ENCODE measurements at regions of chr16 and their contacts with region 1.

Region 1: DNA sequence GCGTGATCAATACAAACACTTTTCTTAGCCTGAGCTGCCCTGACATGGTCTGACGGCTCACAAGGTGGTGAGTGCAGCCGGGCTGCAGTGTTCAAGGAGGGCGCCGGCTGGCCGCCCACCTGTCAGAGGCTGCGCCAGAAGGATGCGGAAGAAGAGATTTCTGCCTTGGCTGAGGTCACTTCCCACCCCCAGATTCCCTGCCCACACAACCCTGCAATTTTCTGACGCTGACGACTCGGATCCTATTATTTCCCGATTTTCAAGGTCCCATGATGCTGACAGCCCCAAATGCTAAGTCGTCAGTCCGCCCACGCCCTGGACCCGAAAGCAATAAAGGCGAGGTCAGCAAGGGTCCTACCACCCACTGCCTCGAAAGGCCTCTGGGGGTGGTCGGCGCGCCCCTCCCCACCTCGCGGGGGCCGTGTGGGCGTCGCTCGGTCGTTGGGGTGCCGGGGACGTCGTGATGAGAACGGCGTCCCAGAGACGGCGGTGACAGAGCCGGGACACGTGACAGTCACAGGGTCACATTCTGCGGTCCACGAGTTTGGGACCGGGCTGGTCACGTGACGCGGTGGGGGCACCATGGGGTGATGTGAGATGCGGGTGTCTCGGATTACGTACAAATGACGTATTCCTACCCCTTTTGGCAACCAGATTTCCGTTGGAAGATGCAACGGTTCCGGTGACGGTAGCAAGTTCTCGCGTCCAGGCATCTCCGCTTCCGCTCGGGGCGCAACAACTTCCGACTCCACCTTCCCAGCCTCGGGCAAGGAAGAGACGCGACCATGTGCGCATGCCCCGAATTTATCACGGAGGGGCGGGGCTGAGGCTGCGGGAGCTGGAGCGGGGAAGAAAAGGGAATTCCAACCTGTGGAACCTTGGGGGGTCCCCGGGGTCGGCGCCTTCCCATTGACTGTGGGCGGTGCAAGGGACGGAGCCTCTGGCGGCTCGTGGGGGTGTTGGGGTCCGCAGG is at the start of gene STX4:
- DNase-seq: peak; percentile 96
- H3K4me3 Mint-ChIP-seq: peak within 1 kb of the TSS; percentile 91
- H3K27ac Mint-ChIP-seq: peak within 1 kb of the TSS; percentile 84
- H3K4me1 Mint-ChIP-seq: no peaks in the 10 kb centered on the region
- H3K27me3 Mint-ChIP-seq: no peaks in the 10 kb centered on the region
- CTCF ChIP-seq: no peak
- total RNA-seq, gene STX4: 66.7 and 89.2 TPM in 2 replicates

Region 2: DNA sequence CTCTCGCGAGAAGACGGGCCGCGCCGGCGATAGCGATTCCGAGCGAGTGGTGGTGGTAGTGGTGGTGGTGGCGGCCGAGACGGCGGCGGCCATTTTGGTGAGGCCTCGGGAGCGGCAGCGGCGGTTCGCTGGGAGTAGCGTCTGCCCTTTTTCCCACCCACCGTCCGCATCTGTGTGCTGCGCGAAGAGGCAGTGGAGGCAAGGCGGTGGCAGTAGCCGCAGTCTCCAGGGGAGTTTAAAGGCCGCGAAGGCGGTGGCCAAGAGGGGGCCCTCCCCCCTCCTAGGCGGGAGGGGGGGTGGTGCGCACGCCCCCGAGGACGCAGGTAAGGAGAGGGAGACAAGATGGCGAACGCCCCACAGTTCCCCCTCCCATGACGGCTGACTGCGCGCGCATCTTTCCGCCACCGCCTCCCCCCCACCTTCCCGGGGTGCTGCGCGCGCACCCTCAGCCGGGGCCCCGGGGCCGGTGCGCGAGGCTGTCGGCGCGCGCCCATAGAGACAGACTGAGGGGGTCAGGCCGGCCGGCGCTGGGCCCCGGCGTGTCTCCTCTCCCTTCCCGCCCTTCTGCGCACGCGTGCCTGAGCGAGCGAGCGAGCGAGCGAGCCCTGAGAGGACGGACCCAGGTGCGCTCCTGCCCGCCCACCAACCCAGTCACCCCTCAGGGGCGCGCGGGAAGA is 334.7 kb before region 1 on chr16:
- CTCF ChIA-PET with region 1: no interaction called
- POLR2A ChIA-PET with region 1: no interaction called
- intact Hi-C with region 1: no loop called
- DNase-seq: peak; percentile 98
- H3K4me3 Mint-ChIP-seq: peak overlapping the region; percentile 86
- H3K27ac Mint-ChIP-seq: peak overlapping the region; percentile 100
- H3K4me1 Mint-ChIP-seq: peaks cover 14% of the 10 kb centered on the region
- H3K27me3 Mint-ChIP-seq: no peaks in the 10 kb centered on the region
- CTCF ChIP-seq: no peak

Region 3: DNA sequence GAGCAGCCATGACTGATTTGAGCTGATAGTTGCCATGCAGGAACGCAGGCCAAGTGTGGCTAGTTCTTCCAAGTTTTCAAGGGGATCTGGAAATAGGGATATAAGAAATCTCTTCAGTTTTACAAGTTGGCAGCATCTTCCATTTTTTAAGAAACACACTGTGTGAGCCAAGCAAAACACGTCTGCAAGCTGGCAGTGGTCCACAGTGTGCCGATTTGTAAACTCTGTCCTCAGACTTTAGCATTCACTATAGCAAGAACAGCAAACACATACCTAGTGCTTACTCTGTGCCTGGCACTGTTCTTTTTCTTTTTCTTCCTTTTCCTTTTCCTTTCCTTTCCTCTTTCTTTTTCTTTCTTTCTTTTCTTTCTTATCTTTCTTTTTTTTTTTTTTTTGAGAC is 81.3 kb before region 1 on chr16:
- CTCF ChIA-PET with region 1: no interaction called
- POLR2A ChIA-PET with region 1: no interaction called
- intact Hi-C with region 1: no loop called
- DNase-seq: peak; percentile 62
- H3K4me3 Mint-ChIP-seq: peak overlapping the region; percentile 41
- H3K27ac Mint-ChIP-seq: no peak overlapping the region
- H3K4me1 Mint-ChIP-seq: no peaks in the 10 kb centered on the region
- H3K27me3 Mint-ChIP-seq: no peaks in the 10 kb centered on the region
- CTCF ChIP-seq: no peak

Region 4: GRCh38 chr16:30997000-30997886 is 35.8 kb before region 1 on chr16:
- CTCF ChIA-PET with region 1: no interaction called
- POLR2A ChIA-PET with region 1: interaction called, 3 read pairs
- intact Hi-C with region 1: loop called (anchors 5 kb)
- DNase-seq: peak; percentile 79
- H3K4me3 Mint-ChIP-seq: peak overlapping the region; percentile 78
- H3K27ac Mint-ChIP-seq: peak overlapping the region; percentile 70
- H3K4me1 Mint-ChIP-seq: peaks cover 11% of the 10 kb centered on the region
- H3K27me3 Mint-ChIP-seq: no peaks in the 10 kb centered on the region
- CTCF ChIP-seq: no peak

Region 5: GRCh38 chr16:31022544-31023251 is 10.3 kb before region 1 on chr16:
- CTCF ChIA-PET with region 1: no interaction called
- POLR2A ChIA-PET with region 1: interaction called, 10 read pairs
- intact Hi-C with region 1: no loop called
- DNase-seq: no peak
- H3K4me3 Mint-ChIP-seq: no peak overlapping the region
- H3K27ac Mint-ChIP-seq: no peak overlapping the region
- H3K4me1 Mint-ChIP-seq: no peaks in the 10 kb centered on the region
- H3K27me3 Mint-ChIP-seq: no peaks in the 10 kb centered on the region
- CTCF ChIP-seq: no peak

Region 6: GRCh38 chr16:31052124-31052523 is 19.1 kb after region 1 on chr16:
- CTCF ChIA-PET with region 1: interaction called, 7 read pairs
- POLR2A ChIA-PET with region 1: interaction called, 10 read pairs
- intact Hi-C with region 1: loop called (anchors 1 kb)
- DNase-seq: peak; percentile 89
- H3K4me3 Mint-ChIP-seq: no peak overlapping the region
- H3K27ac Mint-ChIP-seq: peak overlapping the region; percentile 73
- H3K4me1 Mint-ChIP-seq: peaks cover 20% of the 10 kb centered on the region
- H3K27me3 Mint-ChIP-seq: no peaks in the 10 kb centered on the region
- CTCF ChIP-seq: no peak

Region 7: DNA sequence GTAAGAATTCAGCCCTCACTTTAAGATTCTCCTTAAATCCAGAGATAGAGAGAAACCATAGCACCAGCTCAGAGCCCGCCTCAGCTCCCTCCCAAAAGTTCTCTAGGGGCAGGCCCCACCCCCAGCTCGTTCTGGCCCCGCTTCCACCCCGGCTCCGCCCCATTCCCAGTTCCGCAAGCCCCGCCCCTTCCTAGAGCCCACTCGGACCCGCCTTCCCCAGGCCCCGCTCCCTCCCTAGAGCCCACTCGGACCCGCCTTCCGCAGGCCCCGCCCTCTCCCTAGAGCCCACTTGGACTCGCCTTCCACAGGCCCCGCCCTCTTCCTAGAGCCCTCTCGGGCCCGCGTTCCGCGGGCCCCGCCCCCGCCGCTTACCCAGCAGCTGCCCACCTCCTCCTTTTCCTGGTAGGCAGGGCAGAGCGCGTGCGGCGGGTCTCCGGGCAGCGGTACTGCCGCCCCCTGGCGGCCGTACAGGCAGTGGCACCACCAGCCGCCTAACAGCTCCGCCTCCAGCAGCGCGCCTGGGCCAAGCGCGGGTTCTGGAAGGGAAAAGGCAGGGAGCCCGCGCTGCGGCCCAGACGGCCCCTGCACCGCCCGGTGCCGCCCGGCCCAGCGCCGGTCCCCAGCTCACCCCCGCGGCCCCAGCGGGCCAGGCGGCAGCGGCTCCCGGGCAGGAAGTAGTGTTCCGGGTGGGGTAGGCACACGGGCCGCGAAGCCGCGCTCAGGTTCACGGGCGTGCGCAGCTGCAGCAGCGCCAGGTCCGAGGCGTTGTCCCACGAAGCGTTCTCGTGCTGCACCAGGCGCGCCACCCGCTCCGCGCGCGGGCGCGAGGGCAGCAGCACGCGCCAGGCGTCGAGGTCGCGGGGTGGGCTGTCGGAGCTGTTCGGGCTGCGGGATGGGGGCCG is 109.3 kb after region 1 on chr16:
- CTCF ChIA-PET with region 1: interaction called, 4 read pairs
- POLR2A ChIA-PET with region 1: interaction called, 7 read pairs
- intact Hi-C with region 1: loop called (anchors 5 kb)
- DNase-seq: peak; percentile 99
- H3K4me3 Mint-ChIP-seq: peak overlapping the region; percentile 71
- H3K27ac Mint-ChIP-seq: peak overlapping the region; percentile 91
- H3K4me1 Mint-ChIP-seq: peaks cover 21% of the 10 kb centered on the region
- H3K27me3 Mint-ChIP-seq: no peaks in the 10 kb centered on the region
- CTCF ChIP-seq: peak; percentile 90

Measured in MCF 10A (cell line).